ENCODE measurements at regions of chr6 and their contacts with region 1.

Region 1: DNA sequence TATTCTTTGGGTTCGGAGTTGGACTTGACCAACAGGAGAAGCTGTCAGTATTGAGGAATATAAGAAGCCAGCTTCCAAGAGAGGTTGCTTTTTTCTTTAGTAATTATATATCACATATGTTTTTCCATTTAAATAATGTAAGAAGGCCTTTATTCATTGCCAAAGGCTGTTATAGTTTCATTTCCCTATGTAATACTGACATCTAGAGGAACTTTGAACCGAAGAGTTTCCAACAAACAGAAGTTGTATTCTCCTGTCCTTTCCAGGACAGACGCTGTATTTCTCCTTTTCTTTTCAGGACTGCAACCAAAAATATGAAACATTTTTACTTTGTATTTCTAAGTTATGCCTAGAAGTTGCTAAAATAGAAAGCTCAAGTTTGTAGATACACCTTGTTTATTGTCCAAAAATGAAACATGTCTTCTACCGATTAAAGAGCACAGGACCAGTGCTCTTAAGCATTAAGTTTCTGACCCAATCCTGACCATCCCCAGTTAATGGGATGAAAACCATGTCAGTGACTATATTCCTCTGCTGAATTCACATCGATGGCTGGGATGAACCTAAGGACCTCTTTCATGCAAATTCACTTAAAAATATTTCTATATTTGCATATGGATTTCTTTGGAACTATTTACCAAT is 55.1 kb downstream of the MYLK4 start:
- DNase-seq: no peak
- H3K4me3 ChIP-seq: no peak overlapping the region
- H3K27ac ChIP-seq: no peak overlapping the region
- H3K4me1 ChIP-seq: no peaks in the 10 kb centered on the region
- H3K27me3 ChIP-seq: no peaks in the 10 kb centered on the region
- CTCF ChIP-seq: peak in 2 of 4 experiments; percentile 12 to 45
- POLR2A ChIP-seq: no peak

Region 2: GRCh38 chr6:1596088-1596852 is 1099.3 kb before region 1 on chr6:
- intact Hi-C with region 1: loop called (anchors 5 kb)
- DNase-seq: peak; percentile 50
- H3K4me3 ChIP-seq: no peak overlapping the region
- H3K27ac ChIP-seq: no peak overlapping the region
- H3K4me1 ChIP-seq: no peaks in the 10 kb centered on the region
- H3K27me3 ChIP-seq: no peaks in the 10 kb centered on the region
- CTCF ChIP-seq: peak; percentile 92 to 94 (median 93)
- POLR2A ChIP-seq: no peak

Region 3: DNA sequence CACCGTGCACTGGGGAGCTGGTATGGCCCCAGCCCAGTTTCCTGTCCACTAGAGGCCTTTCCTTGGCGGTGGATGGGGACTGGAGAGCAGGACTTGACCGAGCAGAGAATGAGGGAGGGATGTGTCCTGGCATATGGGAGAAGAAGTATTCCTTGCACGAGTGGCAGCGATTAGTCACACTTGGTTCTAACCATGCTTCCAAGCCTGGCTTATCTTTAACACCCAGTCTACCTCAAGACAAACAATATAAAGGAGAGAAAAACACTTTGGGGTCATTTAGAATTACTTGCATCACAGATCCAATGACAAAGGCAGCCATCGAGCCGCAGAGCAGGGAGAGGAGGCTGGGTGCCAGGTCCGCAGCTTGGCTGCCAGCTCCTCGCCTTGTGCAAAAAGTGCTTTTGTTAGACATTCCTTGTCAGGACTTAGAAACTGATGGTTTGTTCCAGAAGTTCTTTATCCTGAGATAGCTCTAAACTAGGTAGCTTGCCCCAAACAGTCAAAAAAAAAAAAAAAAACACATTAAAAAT is 235.3 kb before region 1 on chr6:
- intact Hi-C with region 1: loop called (anchors 10 kb)
- DNase-seq: no peak
- H3K4me3 ChIP-seq: no peak overlapping the region
- H3K27ac ChIP-seq: no peak overlapping the region
- H3K4me1 ChIP-seq: no peaks in the 10 kb centered on the region
- H3K27me3 ChIP-seq: no peaks in the 10 kb centered on the region
- CTCF ChIP-seq: no peak
- POLR2A ChIP-seq: no peak

Region 4: DNA sequence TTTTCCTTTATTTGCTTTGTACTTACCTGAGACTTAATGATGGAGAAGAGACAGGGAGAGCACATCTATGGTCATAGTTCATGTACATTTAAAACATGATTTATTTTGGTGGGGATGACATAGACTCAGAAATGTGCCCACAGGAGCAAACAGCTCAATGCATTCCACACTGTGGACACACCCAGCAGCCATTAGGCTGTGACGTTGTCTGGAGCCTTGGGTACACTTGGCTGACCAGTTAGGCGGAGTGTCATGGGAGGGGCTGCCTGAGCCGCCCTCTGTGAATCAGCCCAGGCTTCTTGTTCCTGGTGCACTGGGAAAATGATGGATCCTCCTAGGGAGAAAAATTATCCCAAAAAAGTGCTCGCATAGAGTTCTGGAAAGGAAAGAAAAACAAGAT is 219.2 kb before region 1 on chr6:
- intact Hi-C with region 1: no loop called
- DNase-seq: no peak
- H3K4me3 ChIP-seq: no peak overlapping the region
- H3K27ac ChIP-seq: no peak overlapping the region
- H3K4me1 ChIP-seq: no peaks in the 10 kb centered on the region
- H3K27me3 ChIP-seq: no peaks in the 10 kb centered on the region
- CTCF ChIP-seq: no peak
- POLR2A ChIP-seq: no peak

Region 5: DNA sequence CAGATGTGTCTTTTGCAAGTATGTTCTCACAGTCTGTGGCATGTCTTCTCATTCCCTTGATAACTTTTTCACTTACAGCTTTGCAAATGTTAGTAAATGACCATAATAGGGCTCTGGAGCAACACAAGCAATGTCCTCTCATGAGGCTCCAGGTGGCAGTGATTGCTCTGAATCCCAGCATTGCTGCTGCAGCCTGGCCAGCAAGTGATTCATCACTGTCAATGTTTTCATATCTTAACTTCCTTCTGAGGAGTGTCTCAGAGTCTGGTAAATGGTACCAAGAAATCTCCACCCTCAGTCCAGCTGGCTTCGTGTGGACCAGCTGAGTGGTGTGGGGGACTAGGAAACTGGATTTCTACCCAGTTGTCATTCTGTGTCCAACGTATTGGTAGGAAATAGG is 84.5 kb before region 1 on chr6:
- intact Hi-C with region 1: no loop called
- DNase-seq: no peak
- H3K4me3 ChIP-seq: no peak overlapping the region
- H3K27ac ChIP-seq: no peak overlapping the region
- H3K4me1 ChIP-seq: no peaks in the 10 kb centered on the region
- H3K27me3 ChIP-seq: no peaks in the 10 kb centered on the region
- CTCF ChIP-seq: no peak
- POLR2A ChIP-seq: no peak